ENCODE measurements at regions of chr1 and their contacts with region 1.

Region 1: DNA sequence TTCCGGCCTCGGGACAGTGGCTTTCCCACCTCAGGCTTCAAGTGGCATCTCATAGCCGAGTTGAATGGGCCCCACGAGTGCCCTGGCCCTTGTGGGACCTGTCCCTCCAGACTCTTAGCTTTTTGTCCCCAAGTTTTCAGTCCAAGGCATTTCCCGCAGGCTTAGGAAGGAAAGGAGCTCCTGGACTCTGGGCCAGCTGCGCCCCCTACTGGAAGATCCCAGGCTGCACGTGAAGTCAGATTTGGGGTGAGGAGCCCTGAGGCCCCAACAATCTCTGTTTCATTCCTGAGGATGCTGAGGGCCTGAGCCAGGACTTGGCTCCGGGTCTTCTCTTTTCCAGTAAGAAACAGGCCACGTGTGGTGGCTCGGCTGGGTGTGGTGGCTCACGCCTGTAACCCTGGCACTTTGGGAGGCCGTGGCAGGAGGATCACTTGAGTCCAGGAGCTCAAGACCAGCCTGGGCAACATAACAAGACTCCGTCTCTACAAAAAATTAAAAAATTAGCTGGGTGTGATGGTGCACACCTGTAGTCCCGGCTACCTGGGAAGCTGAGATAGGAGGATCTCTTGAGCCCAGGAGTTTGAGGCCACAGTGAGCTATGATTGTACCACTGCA is 67.4 kb downstream of the ARHGEF10L start:
- DNase-seq: peak in 1 of 2 donors; percentile 79
- ATAC-seq: peak; percentile 41

Region 2: GRCh38 chr1:17274186-17275170 is 332.5 kb before region 1 on chr1:
- intact Hi-C with region 1: no loop called
- DNase-seq: peak in 1 of 2 donors; percentile 77
- ATAC-seq: peak; percentile 76

Region 3: GRCh38 chr1:17393230-17393629 is 213.7 kb before region 1 on chr1:
- intact Hi-C with region 1: no loop called
- DNase-seq: no peak
- ATAC-seq: no peak

Region 4: DNA sequence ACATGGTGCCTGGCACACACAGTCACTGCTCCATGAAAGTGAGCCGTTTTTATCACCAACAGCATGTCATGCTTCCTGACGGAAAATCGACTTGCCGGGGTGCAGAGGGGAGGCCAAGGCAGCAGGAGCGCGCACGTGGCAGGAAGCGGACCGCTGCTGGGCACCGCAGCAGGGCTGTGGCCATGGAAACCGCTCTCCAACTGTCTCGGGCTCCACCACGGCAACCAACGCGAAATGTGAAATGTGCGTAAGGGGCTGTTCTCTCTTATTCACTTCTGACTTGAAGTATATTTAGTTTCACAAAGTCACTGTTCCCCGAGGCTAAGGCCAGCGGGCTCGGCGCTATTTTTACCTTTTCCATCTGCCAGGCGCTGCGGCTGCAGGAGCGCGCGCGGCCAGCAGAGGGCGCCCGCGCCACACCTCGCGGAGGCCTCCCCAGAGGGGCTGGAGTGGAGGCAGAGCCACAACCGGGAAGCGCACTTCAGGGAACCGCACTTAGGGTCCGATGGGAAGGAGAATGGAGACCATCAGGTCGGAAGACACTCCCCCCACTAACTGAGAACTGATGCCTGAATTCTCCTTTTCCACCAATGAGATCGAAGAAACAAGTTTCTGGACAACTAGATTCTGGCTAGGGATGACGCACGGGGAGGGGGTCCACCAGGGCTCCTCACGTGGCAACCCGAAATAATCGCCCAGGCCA is 187.2 kb before region 1 on chr1:
- intact Hi-C with region 1: loop called in 1 of 2 experiments (anchors 5 kb)
- DNase-seq: peak; percentile 32 to 72
- ATAC-seq: peak; percentile 82

Region 5: DNA sequence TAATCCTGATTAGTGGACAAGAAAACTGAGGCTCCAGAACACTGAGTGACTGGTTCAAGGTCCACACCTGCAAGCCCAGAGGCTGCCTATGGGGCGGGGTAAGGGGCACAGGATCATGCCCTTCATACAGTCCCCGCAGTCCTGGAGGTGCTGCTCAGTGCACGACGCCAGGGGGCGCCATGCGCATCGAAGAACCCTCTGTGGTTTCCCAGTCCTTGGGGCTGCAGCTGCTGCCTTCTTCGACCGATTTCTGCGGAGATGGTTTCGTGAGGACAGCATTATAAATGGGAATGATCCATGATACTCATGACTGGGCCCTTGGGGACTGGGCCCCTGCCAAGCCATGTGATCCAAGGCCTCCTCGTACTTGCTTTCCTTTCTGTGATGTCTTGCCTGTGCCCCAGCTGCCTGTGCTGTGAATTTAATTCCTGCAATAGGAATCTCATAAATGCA is 104.6 kb before region 1 on chr1:
- intact Hi-C with region 1: loop called in 1 of 2 experiments (anchors 5 kb)
- DNase-seq: peak; percentile 87 to 91
- ATAC-seq: peak; percentile 88